Activated CD4-positive, alpha-beta T cell treated with anti-CD3 and anti-CD28 coated beads for 36 hours (primary cell): ENCODE measurements at regions of chr3 and their contacts with region 1.

Region 1: GRCh38 chr3:49120438-49121131 is at the start of gene USP19:
- DNase-seq: peak; percentile 97
- ATAC-seq: peak; percentile 97
- H3K4me3 Mint-ChIP-seq: peak within 1 kb of the TSS; percentile 87
- H3K27ac Mint-ChIP-seq: peak within 1 kb of the TSS; percentile 88
- H3K4me1 Mint-ChIP-seq: peaks cover 19% of the 10 kb centered on the region
- H3K27me3 Mint-ChIP-seq: no peaks in the 10 kb centered on the region
- total RNA-seq, gene USP19: 45.2 to 45.9 TPM

Region 2: GRCh38 chr3:48966876-48967361 is 153.7 kb before region 1 on chr3:
- CTCF ChIA-PET with region 1: no interaction called
- POLR2A ChIA-PET with region 1: no interaction called
- intact Hi-C with region 1: no loop called
- DNase-seq: peak; percentile 75
- ATAC-seq: peak; percentile 86
- H3K4me3 Mint-ChIP-seq: no peak overlapping the region
- H3K27ac Mint-ChIP-seq: peak overlapping the region; percentile 88
- H3K4me1 Mint-ChIP-seq: peaks cover 17% of the 10 kb centered on the region
- H3K27me3 Mint-ChIP-seq: no peaks in the 10 kb centered on the region

Region 3: DNA sequence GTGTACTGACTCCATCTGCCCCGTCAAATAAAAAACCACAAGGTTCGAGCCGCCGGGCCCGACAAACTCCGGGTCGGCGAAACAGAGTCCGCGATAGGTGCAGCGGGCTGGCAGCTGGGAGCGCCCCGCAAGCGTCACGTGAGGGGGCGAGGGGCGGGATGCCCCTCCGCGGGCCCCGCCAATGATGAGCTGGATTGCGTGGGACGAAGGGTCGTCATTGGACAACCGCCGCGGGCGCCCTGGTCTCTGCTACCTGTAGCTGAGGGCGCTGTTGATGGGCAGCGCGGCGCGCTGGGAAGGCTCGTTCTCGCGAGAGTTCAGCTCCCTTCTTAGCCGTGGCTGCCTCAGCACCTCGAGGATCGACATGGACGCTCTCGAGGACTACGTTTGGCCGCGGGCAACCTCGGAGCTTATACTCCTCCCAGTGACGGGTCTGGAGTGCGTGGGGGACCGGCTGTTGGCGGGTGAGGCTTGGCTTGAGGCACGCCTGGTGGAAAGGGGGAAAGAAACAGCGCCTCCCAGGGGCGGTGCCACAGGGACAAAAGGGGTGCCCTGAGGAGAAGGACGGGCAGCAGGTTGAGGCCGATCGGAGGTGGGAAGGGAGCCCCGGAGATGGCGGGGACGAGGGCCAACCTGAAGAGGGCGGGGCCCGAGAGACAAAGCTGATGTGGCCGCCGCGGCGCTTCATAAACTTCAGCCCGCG is 113.4 kb before region 1 on chr3 and contains the start of gene WDR6:
- CTCF ChIA-PET with region 1: no interaction called
- POLR2A ChIA-PET with region 1: no interaction called
- intact Hi-C with region 1: loop called in 1 of 2 experiments (anchors 1 kb)
- DNase-seq: peak; percentile 99
- ATAC-seq: peak; percentile 90
- H3K4me3 Mint-ChIP-seq: peak within 1 kb of the TSS; percentile 100
- H3K27ac Mint-ChIP-seq: peak within 1 kb of the TSS; percentile 100
- H3K4me1 Mint-ChIP-seq: peaks cover 16% of the 10 kb centered on the region
- H3K27me3 Mint-ChIP-seq: no peaks in the 10 kb centered on the region
- total RNA-seq, gene WDR6: 109 to 127 TPM

Region 4: GRCh38 chr3:49104483-49105291 is 15.9 kb before region 1 on chr3 and contains the start of gene QARS1:
- CTCF ChIA-PET with region 1: interaction called, 7 read pairs
- POLR2A ChIA-PET with region 1: interaction called, 4 read pairs
- intact Hi-C with region 1: loop called (anchors 1 to 2 kb)
- DNase-seq: peak; percentile 94
- ATAC-seq: peak; percentile 100
- H3K4me3 Mint-ChIP-seq: peak within 1 kb of the TSS; percentile 96
- H3K27ac Mint-ChIP-seq: peak within 1 kb of the TSS; percentile 96
- H3K4me1 Mint-ChIP-seq: peaks cover 21% of the 10 kb centered on the region
- H3K27me3 Mint-ChIP-seq: no peaks in the 10 kb centered on the region
- total RNA-seq, gene QARS1: 240 to 342 TPM

Region 5: DNA sequence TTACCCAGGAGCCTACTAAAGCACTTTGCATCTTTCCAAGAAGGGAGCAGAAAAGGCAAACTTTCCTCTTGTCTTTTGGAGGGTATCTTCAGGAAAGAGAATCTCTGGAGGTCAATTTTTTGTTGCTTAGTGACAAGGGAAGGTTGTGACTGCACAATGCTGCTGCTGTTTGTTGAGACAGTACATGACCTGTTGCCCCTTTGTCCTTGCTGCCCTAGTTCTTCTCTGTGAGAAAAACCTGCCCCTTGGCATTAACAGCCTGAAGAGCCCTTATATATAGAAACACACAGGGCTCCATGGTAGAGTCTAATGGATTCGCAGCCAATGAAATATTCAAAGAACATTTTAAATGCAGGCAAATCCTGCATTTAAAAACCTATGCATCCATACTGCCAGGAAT is 71.2 kb after region 1 on chr3:
- CTCF ChIA-PET with region 1: interaction called, 3 read pairs
- POLR2A ChIA-PET with region 1: interaction called, 16 read pairs
- intact Hi-C with region 1: no loop called
- DNase-seq: no peak
- ATAC-seq: no peak
- H3K4me3 Mint-ChIP-seq: no peak overlapping the region
- H3K27ac Mint-ChIP-seq: no peak overlapping the region
- H3K4me1 Mint-ChIP-seq: no peaks in the 10 kb centered on the region
- H3K27me3 Mint-ChIP-seq: peaks cover 4% of the 10 kb centered on the region

Region 6: DNA sequence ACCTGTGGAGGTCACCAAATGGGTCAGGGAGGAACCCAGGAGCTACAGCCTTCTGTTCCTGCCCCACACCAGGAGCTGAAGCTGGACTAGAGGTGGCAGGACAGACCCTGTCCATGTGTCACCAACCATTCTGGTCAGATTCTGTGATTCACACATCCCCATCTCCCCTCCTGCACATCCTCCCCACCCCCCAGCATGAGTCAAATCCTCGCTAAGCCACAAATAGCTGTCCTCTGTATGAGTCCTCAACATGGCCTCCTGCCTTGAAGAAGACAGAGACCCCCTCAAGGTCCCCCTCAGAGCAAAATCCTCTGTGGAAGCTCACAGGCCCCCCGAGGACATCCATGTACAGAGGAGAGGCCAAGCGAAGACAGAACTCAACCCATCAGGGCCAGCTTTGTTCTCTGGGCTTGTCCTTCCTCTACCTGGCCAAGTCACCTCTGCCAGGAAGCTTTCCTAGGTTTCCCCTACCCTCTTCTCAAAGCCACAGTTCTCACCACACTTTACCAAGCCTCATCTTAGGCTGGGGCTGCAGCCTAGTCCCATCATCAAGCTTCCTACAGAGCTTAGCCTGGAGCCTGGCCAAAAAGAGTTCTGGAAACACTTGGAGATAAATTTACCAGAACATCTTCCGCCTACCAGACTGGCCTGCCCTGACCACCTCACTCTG is 1365.8 kb after region 1 on chr3:
- CTCF ChIA-PET with region 1: no interaction called
- POLR2A ChIA-PET with region 1: no interaction called
- intact Hi-C with region 1: no loop called
- DNase-seq: no peak
- ATAC-seq: peak; percentile 35
- H3K4me3 Mint-ChIP-seq: no peak overlapping the region
- H3K27ac Mint-ChIP-seq: no peak overlapping the region
- H3K4me1 Mint-ChIP-seq: peaks cover 9% of the 10 kb centered on the region
- H3K27me3 Mint-ChIP-seq: no peaks in the 10 kb centered on the region